Activated CD4-positive, alpha-beta T cell treated with anti-CD3 and anti-CD28 coated beads for 36 hours (primary cell): ENCODE measurements at regions of chrX and their contacts with region 1.

Region 1: GRCh38 chrX:120839491-120839890 is 36.2 kb downstream of the CT47B1 start:
- DNase-seq: no peak
- ATAC-seq: no peak
- H3K4me3 Mint-ChIP-seq: no peak overlapping the region
- H3K27ac Mint-ChIP-seq: no peak overlapping the region
- H3K4me1 Mint-ChIP-seq: no peaks in the 10 kb centered on the region
- H3K27me3 Mint-ChIP-seq: no peaks in the 10 kb centered on the region

Region 2: DNA sequence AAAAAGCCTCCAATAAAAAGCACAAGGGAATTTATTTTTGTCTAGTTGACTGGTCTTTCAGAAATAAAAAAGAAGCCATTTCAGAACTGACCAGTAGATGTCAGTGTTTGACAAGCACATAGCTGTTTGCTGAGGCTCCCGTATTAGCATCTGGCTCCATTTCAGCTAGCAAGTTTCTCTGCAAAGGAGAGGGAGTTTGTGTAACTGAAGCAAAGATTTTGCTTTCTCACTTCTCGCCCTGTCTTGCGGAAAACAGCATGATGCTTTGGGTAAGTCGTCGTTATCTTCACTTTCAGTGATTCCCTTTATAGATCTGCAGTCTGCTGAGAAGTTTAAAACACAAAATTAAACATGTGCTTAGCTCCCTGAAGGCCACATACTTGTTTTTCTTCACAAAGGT is 49.4 kb before region 1 on chrX:
- CTCF ChIA-PET with region 1: interaction called, 10 read pairs
- POLR2A ChIA-PET with region 1: interaction called, 3 read pairs
- intact Hi-C with region 1: no loop called
- DNase-seq: peak; percentile 27
- ATAC-seq: peak; percentile 81
- H3K4me3 Mint-ChIP-seq: peak overlapping the region; percentile 50
- H3K27ac Mint-ChIP-seq: peak overlapping the region; percentile 95
- H3K4me1 Mint-ChIP-seq: peaks cover 28% of the 10 kb centered on the region
- H3K27me3 Mint-ChIP-seq: no peaks in the 10 kb centered on the region